Activated CD4-positive, alpha-beta T cell treated with anti-CD3 and anti-CD28 coated beads for 36 hours (primary cell): ENCODE measurements at regions of chr1 and their contacts with region 1.

Region 1: DNA sequence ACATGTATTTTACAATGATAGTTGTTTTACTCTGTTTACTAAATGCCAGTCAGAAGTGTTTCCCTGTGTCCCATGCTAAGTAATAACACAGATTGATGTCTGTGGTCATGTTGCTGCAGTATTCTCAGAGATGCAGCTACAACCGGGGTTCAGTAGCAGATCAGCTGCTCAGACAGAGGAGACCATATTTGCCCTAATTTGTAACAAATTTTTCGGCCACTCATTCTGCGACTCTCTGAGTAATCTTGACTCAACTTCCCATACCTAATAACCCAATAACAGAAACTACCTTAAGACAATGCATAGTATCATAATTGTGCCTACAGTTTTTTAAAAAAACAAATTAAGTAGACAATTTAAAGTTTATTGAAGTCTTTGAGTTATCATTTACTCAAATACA is 32.6 kb downstream of the NIBAN1 start:
- DNase-seq: peak; percentile 39
- ATAC-seq: peak; percentile 88
- H3K4me3 Mint-ChIP-seq: no peak overlapping the region
- H3K27ac Mint-ChIP-seq: peak overlapping the region; percentile 35
- H3K4me1 Mint-ChIP-seq: peaks cover 30% of the 10 kb centered on the region
- H3K27me3 Mint-ChIP-seq: no peaks in the 10 kb centered on the region

Region 2: DNA sequence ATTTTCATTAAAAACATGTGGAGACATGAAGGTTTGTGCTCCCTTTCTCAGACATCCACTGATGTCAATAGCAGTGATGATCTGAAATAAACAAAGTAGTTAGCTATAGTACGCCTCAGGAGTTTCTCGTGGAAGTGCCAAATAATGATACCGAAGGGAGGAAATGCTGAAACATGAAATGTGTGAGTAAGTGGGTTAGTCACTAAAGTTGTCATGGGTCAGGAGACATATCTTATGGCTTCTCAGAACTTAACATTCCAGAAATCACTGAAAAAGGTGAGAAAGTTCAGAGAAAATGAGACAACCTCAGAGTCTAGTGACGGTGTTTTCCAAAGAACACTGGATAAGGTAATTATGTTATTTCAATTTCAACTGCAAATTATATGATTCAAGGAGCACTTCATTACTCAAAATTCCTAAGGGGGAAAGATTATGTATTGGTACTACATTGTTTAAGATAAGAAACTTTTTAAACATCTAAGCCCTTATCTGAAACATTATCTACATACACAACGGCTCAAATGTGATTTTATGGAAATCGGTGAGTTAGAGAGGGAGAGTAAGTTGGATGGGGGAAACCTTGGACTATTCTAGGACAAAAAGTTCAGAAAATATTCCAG is 12.0 kb after region 1 on chr1:
- CTCF ChIA-PET with region 1: interaction called, 4 read pairs
- POLR2A ChIA-PET with region 1: no interaction called
- intact Hi-C with region 1: loop called in 1 of 2 experiments (anchors 1 kb)
- DNase-seq: no peak
- ATAC-seq: peak; percentile 88
- H3K4me3 Mint-ChIP-seq: peak overlapping the region; percentile 40
- H3K27ac Mint-ChIP-seq: peak overlapping the region; percentile 65
- H3K4me1 Mint-ChIP-seq: peaks cover 20% of the 10 kb centered on the region
- H3K27me3 Mint-ChIP-seq: no peaks in the 10 kb centered on the region

Region 3: DNA sequence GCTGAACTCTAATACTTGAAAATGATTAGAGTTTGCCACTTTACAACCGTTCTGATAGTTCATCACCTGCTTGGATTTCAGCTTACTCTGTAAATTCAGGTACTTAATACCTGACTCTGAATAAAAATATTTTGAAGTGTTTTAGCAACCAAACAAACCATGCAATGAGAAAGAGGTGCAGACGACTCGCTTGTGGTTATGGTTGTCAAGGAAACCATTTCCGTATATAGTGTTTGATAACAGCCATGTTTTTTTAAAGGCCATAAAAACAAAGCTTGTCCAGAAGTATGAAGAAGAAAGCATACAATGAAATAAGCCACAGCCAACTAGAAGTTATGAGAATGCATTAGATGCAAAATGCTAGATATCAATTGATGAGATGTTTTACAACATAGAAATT is 625.3 kb after region 1 on chr1:
- CTCF ChIA-PET with region 1: no interaction called
- POLR2A ChIA-PET with region 1: no interaction called
- intact Hi-C with region 1: no loop called
- DNase-seq: peak; percentile 41
- ATAC-seq: peak; percentile 57
- H3K4me3 Mint-ChIP-seq: peak overlapping the region; percentile 22
- H3K27ac Mint-ChIP-seq: peak overlapping the region; percentile 79
- H3K4me1 Mint-ChIP-seq: peaks cover 70% of the 10 kb centered on the region
- H3K27me3 Mint-ChIP-seq: no peaks in the 10 kb centered on the region